IMR-90 (cell line): ENCODE measurements at regions of chr2 and their contacts with region 1.

Region 1: DNA sequence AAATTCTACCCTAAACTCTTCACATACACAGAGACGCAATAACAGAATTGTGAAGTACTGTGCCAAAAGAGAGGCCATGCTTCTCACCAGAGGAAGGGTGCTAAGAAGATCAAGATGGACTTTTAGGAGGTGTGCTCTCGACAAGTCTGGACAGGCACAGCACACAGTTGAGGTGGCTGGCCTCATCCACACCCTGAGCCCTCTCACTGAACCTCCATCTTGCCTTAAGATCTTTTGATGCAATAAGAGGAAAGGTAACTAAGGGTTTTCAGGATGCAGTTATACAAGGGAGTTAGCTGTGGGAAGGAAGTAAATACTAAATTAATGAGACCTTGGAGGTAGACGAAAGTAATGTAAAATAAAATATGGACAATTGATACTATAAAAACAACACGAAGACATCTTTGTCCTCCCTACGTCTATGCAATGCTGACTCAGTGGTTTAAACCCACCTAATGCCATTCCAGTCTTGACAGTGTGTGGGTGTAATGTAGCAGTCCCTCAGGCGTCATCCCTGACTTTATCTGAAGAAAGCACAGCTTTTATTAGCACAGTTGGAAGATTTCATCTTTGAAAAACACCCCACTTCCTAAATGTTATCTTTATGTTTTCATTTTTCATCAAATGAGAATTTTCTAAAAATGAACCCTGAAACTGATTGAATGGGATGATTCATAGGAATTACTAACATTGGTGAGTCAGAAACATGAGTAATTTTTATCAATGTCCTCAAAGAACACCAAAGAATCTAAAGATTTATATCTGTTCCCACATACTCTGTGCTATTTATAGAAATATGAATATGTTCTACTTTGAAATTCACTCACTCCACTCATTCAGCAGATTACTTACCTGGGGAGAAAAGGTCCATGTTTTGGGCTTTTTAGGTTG is 34.0 kb upstream of the MALL start:
- DNase-seq: peak; percentile 94
- ATAC-seq: peak; percentile 86
- H3K4me3 ChIP-seq: no peak overlapping the region
- H3K27ac ChIP-seq: peak overlapping the region; percentile 58
- H3K4me1 ChIP-seq: peaks cover 3% of the 10 kb centered on the region
- H3K27me3 ChIP-seq: no peaks in the 10 kb centered on the region
- CTCF ChIP-seq: no peak
- POLR2A ChIP-seq: no peak
- RAD21 ChIP-seq: no peak

Region 2: GRCh38 chr2:110116033-110116710 is 33.4 kb before region 1 on chr2:
- CTCF ChIA-PET with region 1: no interaction called
- POLR2A ChIA-PET with region 1: no interaction called
- dilution Hi-C with region 1: no loop called
- in situ Hi-C with region 1: no loop called
- intact Hi-C with region 1: loop called (anchors 5 kb)
- DNase-seq: peak; percentile 54
- ATAC-seq: peak; percentile 88
- H3K4me3 ChIP-seq: no peak overlapping the region
- H3K27ac ChIP-seq: no peak overlapping the region
- H3K4me1 ChIP-seq: no peaks in the 10 kb centered on the region
- H3K27me3 ChIP-seq: peaks cover 15% of the 10 kb centered on the region
- CTCF ChIP-seq: peak; percentile 43
- POLR2A ChIP-seq: no peak
- RAD21 ChIP-seq: peak; percentile 26; the same call in 1 of the 2 replicates

Region 3: DNA sequence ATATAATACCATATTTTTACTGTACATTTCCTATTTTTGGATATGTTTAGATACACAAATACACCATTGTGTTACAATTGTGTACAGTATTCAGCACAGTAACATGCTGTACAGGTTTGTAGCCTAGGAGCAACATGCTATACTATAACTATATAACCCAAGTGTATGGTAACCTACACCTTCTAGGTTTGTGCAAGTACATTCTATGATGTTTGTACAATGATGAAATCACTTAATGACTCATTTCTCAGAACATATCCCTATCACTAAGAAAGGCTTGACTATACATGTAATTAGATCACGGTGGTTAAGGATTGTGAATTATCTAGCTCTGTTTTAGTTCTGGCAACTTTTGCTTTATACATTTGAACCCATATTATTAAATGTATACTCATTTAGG is 23.9 kb after region 1 on chr2:
- CTCF ChIA-PET with region 1: no interaction called
- POLR2A ChIA-PET with region 1: no interaction called
- dilution Hi-C with region 1: no loop called
- in situ Hi-C with region 1: no loop called
- intact Hi-C with region 1: loop called (anchors 2 kb)
- DNase-seq: peak; percentile 70
- ATAC-seq: peak; percentile 63
- H3K4me3 ChIP-seq: no peak overlapping the region
- H3K27ac ChIP-seq: no peak overlapping the region
- H3K4me1 ChIP-seq: no peaks in the 10 kb centered on the region
- H3K27me3 ChIP-seq: no peaks in the 10 kb centered on the region
- CTCF ChIP-seq: no peak
- POLR2A ChIP-seq: no peak
- RAD21 ChIP-seq: no peak